ENCODE measurements at regions of chr10 and their contacts with region 1.

Region 1: DNA sequence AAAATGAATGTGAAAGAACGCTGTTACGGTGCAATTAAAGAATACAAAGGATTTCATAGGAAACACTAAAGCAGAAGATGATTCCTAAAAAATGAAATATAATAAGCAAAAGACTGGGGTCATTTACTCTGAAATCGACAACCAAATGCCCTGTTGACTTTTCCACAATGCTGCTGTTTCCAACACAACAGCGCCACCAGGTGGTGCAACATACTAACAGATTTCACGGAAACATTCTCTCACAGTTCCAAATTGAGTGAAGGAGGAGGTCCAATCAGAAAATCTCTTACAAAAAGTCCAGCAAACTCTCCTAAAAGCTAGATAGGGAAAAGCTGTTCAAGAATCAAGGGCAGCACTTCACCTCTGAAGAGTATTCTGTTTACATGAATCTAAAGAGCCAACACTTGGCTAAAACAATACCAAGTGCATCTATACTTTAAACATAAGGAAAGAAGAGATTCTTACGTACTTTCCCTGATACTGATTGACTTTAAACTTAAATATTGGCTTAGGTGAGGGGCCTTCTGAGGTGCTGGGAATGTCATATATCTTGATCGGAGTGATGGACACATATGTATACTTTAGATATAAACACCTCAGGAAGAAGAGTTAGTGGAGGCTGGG is 55.9 kb downstream of the UPF2 start:
- DNase-seq: peak; percentile 42 to 57 (median 54)
- H3K4me3 ChIP-seq: no peak overlapping the region
- H3K4me3 Mint-ChIP-seq: no peak overlapping the region
- H3K27ac ChIP-seq: no peak overlapping the region
- H3K27ac Mint-ChIP-seq: no peak overlapping the region
- H3K4me1 ChIP-seq: no peaks in the 10 kb centered on the region
- H3K4me1 Mint-ChIP-seq: peaks cover 4% of the 10 kb centered on the region
- H3K27me3 ChIP-seq: no peaks in the 10 kb centered on the region
- H3K27me3 Mint-ChIP-seq: no peaks in the 10 kb centered on the region
- CTCF ChIP-seq: peak; percentile 95

Region 2: GRCh38 chr10:11789306-11789705 is 197.4 kb before region 1 on chr10:
- intact Hi-C with region 1: loop called in 1 of 2 experiments (anchors 5 kb)
- DNase-seq: no peak
- H3K4me3 ChIP-seq: no peak overlapping the region
- H3K4me3 Mint-ChIP-seq: no peak overlapping the region
- H3K27ac ChIP-seq: no peak overlapping the region
- H3K27ac Mint-ChIP-seq: no peak overlapping the region
- H3K4me1 ChIP-seq: no peaks in the 10 kb centered on the region
- H3K4me1 Mint-ChIP-seq: no peaks in the 10 kb centered on the region
- H3K27me3 ChIP-seq: no peaks in the 10 kb centered on the region
- H3K27me3 Mint-ChIP-seq: peaks cover 0 to 11% (median 1%) of the 10 kb centered on the region in 3 donors
- CTCF ChIP-seq: no peak

Region 3: DNA sequence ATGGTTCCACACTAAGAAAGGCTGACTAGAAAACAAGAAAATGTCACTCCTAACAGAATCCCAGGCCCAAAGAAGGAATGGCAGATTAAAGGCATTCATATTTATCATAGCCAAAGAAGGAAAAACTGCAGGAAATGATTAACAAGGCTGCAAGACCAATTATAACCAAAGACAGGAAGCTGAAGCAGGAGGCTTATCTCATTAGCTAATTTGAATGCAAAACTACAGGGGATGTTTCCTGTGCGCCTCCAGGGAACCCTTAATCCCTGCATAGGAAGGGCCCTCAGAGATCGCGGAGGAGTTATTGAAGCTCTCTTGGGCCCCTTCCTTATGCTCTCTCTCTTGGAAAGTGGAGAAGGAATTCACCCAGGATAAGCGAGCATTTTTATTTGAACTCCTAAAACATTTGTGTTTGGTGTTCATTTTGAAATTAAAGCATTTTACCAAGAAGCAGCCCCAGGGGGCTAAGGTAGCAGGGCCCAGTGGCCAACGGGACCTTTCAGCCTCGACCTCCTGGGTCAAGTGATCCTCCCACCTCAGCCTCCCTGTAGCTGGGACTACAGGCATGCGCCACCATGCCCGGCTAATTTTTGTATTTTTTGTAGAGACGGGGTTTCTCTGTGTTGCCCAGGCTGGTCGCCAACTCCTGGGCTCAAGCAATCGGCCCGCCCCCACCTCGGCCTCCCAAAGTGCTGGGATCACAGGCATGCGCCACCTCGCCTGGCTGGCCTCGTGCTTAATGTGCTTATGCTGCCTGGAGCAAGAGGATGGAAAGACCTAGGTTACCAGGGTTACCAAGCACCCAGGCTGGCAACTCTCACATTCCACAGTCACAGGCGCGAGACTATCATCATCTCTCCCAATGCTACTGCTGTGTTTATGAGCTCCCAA is 187.6 kb before region 1 on chr10:
- intact Hi-C with region 1: loop called in 1 of 2 experiments (anchors 5 kb)
- DNase-seq: no peak
- H3K4me3 ChIP-seq: no peak overlapping the region
- H3K4me3 Mint-ChIP-seq: peak overlapping the region in 1 of 2 donors; percentile 33
- H3K27ac ChIP-seq: no peak overlapping the region
- H3K27ac Mint-ChIP-seq: no peak overlapping the region
- H3K4me1 ChIP-seq: peaks cover 0 to 8% of the 10 kb centered on the region in 2 donors
- H3K4me1 Mint-ChIP-seq: peaks cover 10% of the 10 kb centered on the region
- H3K27me3 ChIP-seq: no peaks in the 10 kb centered on the region
- H3K27me3 Mint-ChIP-seq: peaks cover 0 to 4% (median 2%) of the 10 kb centered on the region in 3 donors
- CTCF ChIP-seq: no peak

Measured in CD14-positive monocyte (primary cell).